Heart right ventricle (tissue), 16 donors: ENCODE measurements at regions of chr3 and their contacts with region 1.

Region 1: GRCh38 chr3:12868039-12869034 is 27.0 kb upstream of the RPL32 start:
- DNase-seq: peak; percentile 83 to 85
- ATAC-seq: peak; percentile 86 to 95 (median 94)
- H3K4me3 ChIP-seq: peak overlapping the region in 8 of 10 donors; percentile 14 to 42 (median 32)
- H3K27ac ChIP-seq: no peak overlapping the region
- H3K4me1 ChIP-seq: peaks cover 0 to 15% (median 11%) of the 10 kb centered on the region in 9 donors
- H3K27me3 ChIP-seq: peaks cover 0 to 16% (median 0%) of the 10 kb centered on the region in 7 donors
- CTCF ChIP-seq: peak; percentile 87 to 97 (median 92)

Region 2: DNA sequence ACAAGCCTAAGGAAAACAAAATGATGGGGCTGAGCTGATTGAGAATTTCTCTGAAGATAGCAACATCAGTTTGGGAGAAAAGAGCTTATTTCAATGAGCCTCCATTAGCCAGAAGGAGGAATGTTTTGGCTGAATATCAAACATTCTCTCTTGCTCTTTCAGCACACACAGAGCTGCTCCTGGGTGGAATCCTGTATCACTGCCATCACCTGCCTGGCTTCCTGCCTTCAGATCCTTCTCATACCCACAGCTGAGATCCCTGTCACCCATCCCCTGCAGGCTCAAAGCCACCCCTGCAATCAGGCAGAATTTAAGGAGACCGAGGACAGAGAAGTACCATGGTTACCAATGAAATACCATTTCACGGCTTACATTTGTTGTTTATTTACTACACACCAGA is 891.4 kb before region 1 on chr3:
- intact Hi-C with region 1: no loop called
- DNase-seq: no peak
- ATAC-seq: no peak
- H3K4me3 ChIP-seq: no peak overlapping the region
- H3K27ac ChIP-seq: no peak overlapping the region
- H3K4me1 ChIP-seq: no peaks in the 10 kb centered on the region
- H3K27me3 ChIP-seq: peaks cover 0 to 48% (median 30%) of the 10 kb centered on the region in 7 donors
- CTCF ChIP-seq: no peak

Region 3: GRCh38 chr3:12891985-12892839 is 23.9 kb after region 1 on chr3:
- intact Hi-C with region 1: loop called in 7 of 10 experiments (anchors 1 to 2 kb)
- DNase-seq: no peak
- ATAC-seq: peak in 7 of 8 donors; percentile 14 to 43 (median 36)
- H3K4me3 ChIP-seq: peak overlapping the region in 5 of 10 donors; percentile 16 to 34 (median 22)
- H3K27ac ChIP-seq: no peak overlapping the region
- H3K4me1 ChIP-seq: peaks cover 12 to 43% (median 31%) of the 10 kb centered on the region in 9 donors
- H3K27me3 ChIP-seq: peaks cover 0 to 8% (median 0%) of the 10 kb centered on the region in 7 donors
- CTCF ChIP-seq: peak; percentile 81 to 92 (median 87)

Region 4: GRCh38 chr3:12994607-12995388 is 126.5 kb after region 1 on chr3:
- intact Hi-C with region 1: loop called in 7 of 10 experiments (anchors 1 to 10 kb)
- DNase-seq: peak; percentile 90
- ATAC-seq: peak; percentile 76 to 90 (median 84)
- H3K4me3 ChIP-seq: peak overlapping the region; percentile 69 to 94 (median 85)
- H3K27ac ChIP-seq: peak overlapping the region; percentile 73 to 95 (median 92)
- H3K4me1 ChIP-seq: peaks cover 8 to 79% (median 45%) of the 10 kb centered on the region in 9 donors
- H3K27me3 ChIP-seq: no peaks in the 10 kb centered on the region
- CTCF ChIP-seq: peak; percentile 87 to 99 (median 95)